Breast epithelium (tissue), 4 donors: ENCODE measurements at regions of chr9 and their contacts with region 1.

Region 1: GRCh38 chr9:82740003-82740402 is 322.9 kb downstream of the RASEF start:
- DNase-seq: no peak
- H3K4me3 ChIP-seq: no peak overlapping the region
- H3K27ac ChIP-seq: no peak overlapping the region
- H3K4me1 ChIP-seq: no peaks in the 10 kb centered on the region
- H3K27me3 ChIP-seq: no peaks in the 10 kb centered on the region
- CTCF ChIP-seq: no peak
- POLR2A ChIP-seq: no peak

Region 2: DNA sequence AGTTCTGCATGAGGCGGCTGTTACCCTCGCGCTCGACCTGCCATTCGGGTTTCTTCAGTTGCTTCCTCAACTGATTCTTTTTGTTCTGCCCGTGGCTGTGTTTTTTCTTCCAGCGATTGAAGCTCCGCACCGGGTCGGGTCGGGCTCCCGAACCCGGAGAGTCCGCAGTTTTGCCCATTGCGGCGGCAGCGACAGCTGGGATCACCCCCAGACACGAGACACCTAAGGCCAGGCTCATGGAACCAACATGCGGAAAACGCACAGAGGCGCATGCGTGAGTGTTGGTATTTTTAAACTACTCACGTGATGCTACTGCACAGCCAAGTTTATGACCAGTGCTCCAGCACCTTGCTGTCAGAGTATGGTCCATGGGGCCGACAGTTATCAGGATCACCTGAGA is 651.4 kb before region 1 on chr9:
- intact Hi-C with region 1: loop called (anchors 5 kb)
- DNase-seq: no peak
- H3K4me3 ChIP-seq: no peak overlapping the region
- H3K27ac ChIP-seq: no peak overlapping the region
- H3K4me1 ChIP-seq: no peaks in the 10 kb centered on the region
- H3K27me3 ChIP-seq: no peaks in the 10 kb centered on the region
- CTCF ChIP-seq: no peak
- POLR2A ChIP-seq: no peak